WTC11 (cell line): ENCODE measurements at regions of chr5 and their contacts with region 1.

Region 1: GRCh38 chr5:132064738-132065331 is 4.4 kb downstream of the IL3 start:
- DNase-seq: peak; percentile 92
- ATAC-seq: peak; percentile 82
- H3K4me3 Mint-ChIP-seq: no peak overlapping the region
- H3K27ac Mint-ChIP-seq: no peak overlapping the region
- H3K4me1 Mint-ChIP-seq: peaks cover 14% of the 10 kb centered on the region
- H3K27me3 Mint-ChIP-seq: no peaks in the 10 kb centered on the region
- CTCF ChIP-seq: peak; percentile 98

Region 2: DNA sequence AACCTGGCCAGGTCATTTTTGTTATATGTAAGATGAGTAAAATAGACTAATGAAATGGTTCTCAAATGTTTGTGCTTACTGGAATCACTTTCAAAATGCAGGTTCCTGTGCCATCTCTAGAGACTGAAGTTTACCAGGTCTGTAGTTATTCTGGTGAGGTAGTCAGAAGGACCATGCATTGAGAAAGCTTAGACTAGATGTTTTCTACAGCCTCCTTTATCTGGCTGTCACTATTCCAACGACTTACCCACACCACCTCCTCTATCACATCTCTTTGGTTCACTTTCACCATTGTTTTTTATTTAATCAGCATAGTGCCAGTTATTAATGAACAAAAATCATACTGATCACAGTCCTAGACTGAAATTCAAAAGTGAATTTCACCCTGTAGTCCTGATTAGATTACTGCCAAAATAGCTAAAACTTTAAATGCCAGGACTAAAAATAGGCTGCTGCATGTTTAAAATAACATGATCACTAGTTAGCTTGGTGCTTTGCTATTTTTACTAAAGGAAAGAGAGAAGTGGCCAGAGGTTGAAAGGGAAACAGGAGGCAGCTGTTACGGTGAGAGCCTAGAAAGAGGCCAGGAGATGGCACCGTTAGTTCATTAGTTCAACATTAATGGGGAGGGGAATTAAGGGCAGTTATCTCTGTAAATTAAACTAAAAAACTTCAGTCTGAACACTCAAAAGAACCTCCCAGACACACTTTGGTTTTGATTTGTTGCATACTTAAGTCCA is 254.2 kb before region 1 on chr5:
- CTCF ChIA-PET with region 1: interaction called, 21 read pairs
- POLR2A ChIA-PET with region 1: no interaction called
- DNase-seq: peak; percentile 15
- ATAC-seq: peak; percentile 75
- H3K4me3 Mint-ChIP-seq: no peak overlapping the region
- H3K27ac Mint-ChIP-seq: no peak overlapping the region
- H3K4me1 Mint-ChIP-seq: peaks cover 7% of the 10 kb centered on the region
- H3K27me3 Mint-ChIP-seq: no peaks in the 10 kb centered on the region; the same call in 1 of the 2 replicates
- CTCF ChIP-seq: no peak

Region 3: GRCh38 chr5:132050136-132050535 is 14.7 kb before region 1 on chr5:
- CTCF ChIA-PET with region 1: interaction called, 11 read pairs
- POLR2A ChIA-PET with region 1: no interaction called
- DNase-seq: no peak
- ATAC-seq: no peak
- H3K4me3 Mint-ChIP-seq: no peak overlapping the region
- H3K27ac Mint-ChIP-seq: no peak overlapping the region
- H3K4me1 Mint-ChIP-seq: peaks cover 14% of the 10 kb centered on the region
- H3K27me3 Mint-ChIP-seq: no peaks in the 10 kb centered on the region
- CTCF ChIP-seq: no peak

Region 4: DNA sequence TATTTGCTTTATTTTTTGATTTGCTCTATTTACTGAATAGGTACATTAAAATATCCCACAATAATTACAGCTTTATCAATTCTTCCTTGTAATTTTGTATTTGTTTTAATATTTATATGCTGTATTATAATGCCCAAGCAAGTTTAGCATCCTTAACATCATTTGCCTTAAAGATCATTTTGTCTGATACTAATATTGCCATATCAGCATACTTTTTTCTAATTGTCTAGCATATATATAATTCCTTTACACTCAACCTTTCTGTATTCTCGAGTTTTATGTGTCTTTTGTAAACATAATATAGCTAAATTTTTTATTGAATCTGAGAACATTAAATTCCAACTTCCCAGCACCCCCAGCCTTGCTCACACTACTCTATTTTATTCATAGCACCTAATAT is 98.1 kb after region 1 on chr5:
- CTCF ChIA-PET with region 1: no interaction called
- POLR2A ChIA-PET with region 1: no interaction called
- DNase-seq: no peak
- ATAC-seq: no peak
- H3K4me3 Mint-ChIP-seq: no peak overlapping the region
- H3K27ac Mint-ChIP-seq: no peak overlapping the region
- H3K4me1 Mint-ChIP-seq: no peaks in the 10 kb centered on the region
- H3K27me3 Mint-ChIP-seq: 0 out of 2 replicates have a peak, but pooled peaks cover 2% of the 10 kb centered on the region
- CTCF ChIP-seq: no peak